PC-3 (cell line): ENCODE measurements at regions of chr2 and their contacts with region 1.

Region 1: DNA sequence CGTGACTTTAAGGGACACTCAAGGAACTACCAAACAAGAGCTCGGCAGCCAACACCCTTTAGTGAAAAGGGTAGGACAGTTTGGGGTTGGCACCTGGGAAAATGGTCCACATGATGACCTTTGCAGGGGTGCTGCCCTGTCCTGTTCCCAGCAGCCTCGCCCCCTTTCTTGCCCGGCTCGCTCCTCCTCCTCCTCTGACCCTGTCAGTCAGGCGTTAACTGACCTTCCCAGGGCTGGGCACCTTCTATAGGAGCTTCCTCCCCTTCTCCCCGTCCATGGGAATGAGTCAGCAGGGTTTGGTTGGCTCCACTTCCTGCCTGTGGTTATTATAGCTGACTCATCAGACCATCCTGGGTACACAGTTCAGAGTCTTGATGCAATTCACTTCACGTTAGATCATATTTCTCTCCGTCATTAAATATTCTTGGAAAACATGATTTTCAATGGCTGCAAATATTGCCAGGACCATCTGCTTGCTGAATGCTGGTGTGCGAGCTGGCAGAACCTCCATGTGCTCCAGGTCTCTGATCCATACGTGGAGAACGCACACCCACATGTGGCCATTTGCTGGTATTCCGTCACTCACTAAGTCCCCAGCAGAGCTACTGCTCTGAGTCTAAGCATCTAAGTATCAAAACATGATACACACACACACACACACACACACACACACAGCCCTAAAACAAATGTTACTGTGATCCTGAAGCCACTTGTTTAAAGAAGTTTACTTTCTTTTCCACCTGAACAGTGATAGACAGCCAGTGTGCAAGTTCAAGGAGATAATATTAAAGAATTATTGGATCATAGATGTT is 185.0 kb downstream of the ANAPC1 start:
- DNase-seq: peak; percentile 98
- ATAC-seq: peak; percentile 97
- H3K4me3 ChIP-seq: peak overlapping the region; percentile 18; the same call in 1 of the 2 replicates
- H3K27ac ChIP-seq: peak overlapping the region; percentile 87
- H3K4me1 ChIP-seq: peaks cover 49% of the 10 kb centered on the region
- H3K27me3 ChIP-seq: no peaks in the 10 kb centered on the region
- CTCF ChIP-seq: peak; percentile 78

Region 2: GRCh38 chr2:111667542-111668273 is 31.2 kb before region 1 on chr2:
- CTCF ChIA-PET with region 1: no interaction called
- POLR2A ChIA-PET with region 1: no interaction called
- intact Hi-C with region 1: loop called (anchors 2 kb)
- DNase-seq: peak; percentile 68
- ATAC-seq: peak; percentile 87
- H3K4me3 ChIP-seq: no peak overlapping the region
- H3K27ac ChIP-seq: no peak overlapping the region
- H3K4me1 ChIP-seq: peaks cover 12% of the 10 kb centered on the region
- H3K27me3 ChIP-seq: no peaks in the 10 kb centered on the region
- CTCF ChIP-seq: peak; percentile 68

Region 3: GRCh38 chr2:112168422-112169102 is 469.6 kb after region 1 on chr2:
- CTCF ChIA-PET with region 1: no interaction called
- POLR2A ChIA-PET with region 1: no interaction called
- intact Hi-C with region 1: no loop called
- DNase-seq: no peak
- ATAC-seq: no peak
- H3K4me3 ChIP-seq: no peak overlapping the region
- H3K27ac ChIP-seq: no peak overlapping the region
- H3K4me1 ChIP-seq: no peaks in the 10 kb centered on the region
- H3K27me3 ChIP-seq: no peaks in the 10 kb centered on the region
- CTCF ChIP-seq: no peak

Region 4: DNA sequence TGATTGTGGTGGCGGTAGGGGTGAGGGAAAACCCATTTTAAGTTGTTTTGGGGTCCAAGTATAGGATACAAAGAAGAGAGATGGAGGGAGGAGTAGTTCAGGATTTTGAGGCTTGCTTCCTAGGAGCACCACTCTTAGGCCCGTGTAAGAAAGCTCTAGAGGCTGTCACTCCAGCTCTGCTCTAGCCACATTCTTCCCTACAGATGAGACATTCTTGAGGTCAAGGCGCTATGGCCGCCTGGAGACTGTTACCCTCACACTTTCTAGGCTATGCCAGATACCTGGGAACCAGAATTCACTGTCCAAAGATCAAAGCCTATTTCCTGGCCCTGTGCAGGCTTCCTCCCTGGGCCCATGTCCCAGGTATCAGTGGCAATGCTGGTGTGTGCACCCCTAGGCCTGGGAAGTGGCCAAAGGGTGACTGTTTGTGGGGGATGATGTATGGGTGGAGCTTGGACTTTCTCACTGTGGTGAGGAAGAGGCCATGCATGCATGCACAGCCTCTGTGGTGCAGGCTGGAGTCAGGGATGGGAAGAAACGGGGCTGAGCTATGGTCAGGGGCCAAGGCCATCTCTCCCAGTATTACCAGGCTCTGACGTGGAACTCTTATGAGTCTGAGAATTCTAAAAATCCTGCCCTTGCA is 776.0 kb after region 1 on chr2:
- CTCF ChIA-PET with region 1: no interaction called
- POLR2A ChIA-PET with region 1: no interaction called
- intact Hi-C with region 1: no loop called
- DNase-seq: no peak
- ATAC-seq: no peak; the same call in 1 of the 2 replicates
- H3K4me3 ChIP-seq: no peak overlapping the region
- H3K27ac ChIP-seq: no peak overlapping the region
- H3K4me1 ChIP-seq: no peaks in the 10 kb centered on the region
- H3K27me3 ChIP-seq: no peaks in the 10 kb centered on the region
- CTCF ChIP-seq: no peak